Panc1 (cell line): ENCODE measurements at regions of chr9 and their contacts with region 1.

Region 1: GRCh38 chr9:130144703-130145102 is 27.5 kb upstream of the NCS1 start:
- DNase-seq: no peak
- ATAC-seq: no peak
- H3K4me3 ChIP-seq: no peak overlapping the region
- H3K27ac ChIP-seq: no peak overlapping the region
- H3K4me1 ChIP-seq: no peaks in the 10 kb centered on the region
- H3K27me3 ChIP-seq: no peaks in the 10 kb centered on the region
- CTCF ChIP-seq: no peak

Region 2: GRCh38 chr9:130124085-130124860 is 20.4 kb before region 1 on chr9:
- CTCF ChIA-PET with region 1: interaction called, 15 read pairs
- POLR2A ChIA-PET with region 1: no interaction called
- in situ Hi-C with region 1: no loop called
- intact Hi-C with region 1: no loop called
- DNase-seq: no peak
- ATAC-seq: no peak
- H3K4me3 ChIP-seq: no peak overlapping the region
- H3K27ac ChIP-seq: no peak overlapping the region
- H3K4me1 ChIP-seq: no peaks in the 10 kb centered on the region
- H3K27me3 ChIP-seq: no peaks in the 10 kb centered on the region
- CTCF ChIP-seq: no peak

Region 3: DNA sequence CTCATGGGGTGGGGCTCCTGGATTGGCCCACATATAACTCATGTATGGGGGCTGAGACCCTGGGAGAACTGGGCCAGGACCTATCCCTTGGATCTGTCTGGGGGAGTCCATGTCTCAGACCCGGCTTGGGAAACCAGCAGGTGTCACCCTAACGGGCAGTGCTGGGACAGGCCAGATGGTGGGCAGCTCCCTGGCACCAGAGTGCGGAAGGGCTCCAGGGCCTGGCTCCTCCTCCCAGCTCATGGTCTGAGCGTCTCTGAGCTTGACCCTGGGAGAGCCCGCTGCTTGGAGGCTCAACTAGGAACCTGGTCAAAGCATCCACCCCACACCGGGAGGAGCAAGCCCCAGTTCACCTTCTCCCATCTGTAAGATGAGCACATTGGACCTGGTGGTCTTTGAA is 12.0 kb after region 1 on chr9:
- CTCF ChIA-PET with region 1: no interaction called
- POLR2A ChIA-PET with region 1: interaction called, 31 read pairs
- in situ Hi-C with region 1: no loop called
- intact Hi-C with region 1: no loop called
- DNase-seq: no peak
- ATAC-seq: peak; percentile 78
- H3K4me3 ChIP-seq: no peak overlapping the region
- H3K27ac ChIP-seq: no peak overlapping the region
- H3K4me1 ChIP-seq: no peaks in the 10 kb centered on the region
- H3K27me3 ChIP-seq: no peaks in the 10 kb centered on the region
- CTCF ChIP-seq: no peak; the same call in 1 of the 2 replicates

Region 4: GRCh38 chr9:130396581-130396980 is 251.9 kb after region 1 on chr9:
- CTCF ChIA-PET with region 1: no interaction called
- POLR2A ChIA-PET with region 1: no interaction called
- in situ Hi-C with region 1: no loop called
- intact Hi-C with region 1: no loop called
- DNase-seq: no peak
- ATAC-seq: no peak
- H3K4me3 ChIP-seq: no peak overlapping the region
- H3K27ac ChIP-seq: no peak overlapping the region
- H3K4me1 ChIP-seq: no peaks in the 10 kb centered on the region
- H3K27me3 ChIP-seq: no peaks in the 10 kb centered on the region
- CTCF ChIP-seq: no peak